Gastrocnemius medialis (tissue), 4 donors: ENCODE measurements at regions of chr6 and their contacts with region 1.

Region 1: GRCh38 chr6:125779924-125780539 is 10.7 kb upstream of the NCOA7 start:
- DNase-seq: peak; percentile 67 to 74
- ATAC-seq: peak; percentile 92 to 94
- H3K4me3 ChIP-seq: peak overlapping the region; percentile 65 to 80 (median 75)
- H3K27ac ChIP-seq: peak overlapping the region; percentile 91 to 97 (median 95)
- H3K4me1 ChIP-seq: peaks cover 0 to 5% of the 10 kb centered on the region in 2 donors
- H3K27me3 ChIP-seq: no peaks in the 10 kb centered on the region
- CTCF ChIP-seq: peak; percentile 17 to 52 (median 44)
- POLR2A ChIP-seq: no peak

Region 2: GRCh38 chr6:124961777-124962611 is 818.0 kb before region 1 on chr6 and contains the start of gene RNF217:
- in situ Hi-C with region 1: no loop called
- intact Hi-C with region 1: loop called (anchors 10 kb)
- DNase-seq: peak; percentile 29 to 59
- ATAC-seq: peak; percentile 34 to 39
- H3K4me3 ChIP-seq: peak within 1 kb of the TSS; percentile 72 to 87 (median 81)
- H3K27ac ChIP-seq: peak within 1 kb of the TSS; percentile 83 to 92 (median 90)
- H3K4me1 ChIP-seq: peaks cover 34 to 43% of the 10 kb centered on the region in 2 donors
- H3K27me3 ChIP-seq: no peaks in the 10 kb centered on the region
- CTCF ChIP-seq: peak in 1 of 5 experiments; percentile 10
- POLR2A ChIP-seq: peak; percentile 50 to 54
- total RNA-seq, gene RNF217: 4.5 to 15.5 (median 12.4) TPM

Region 3: DNA sequence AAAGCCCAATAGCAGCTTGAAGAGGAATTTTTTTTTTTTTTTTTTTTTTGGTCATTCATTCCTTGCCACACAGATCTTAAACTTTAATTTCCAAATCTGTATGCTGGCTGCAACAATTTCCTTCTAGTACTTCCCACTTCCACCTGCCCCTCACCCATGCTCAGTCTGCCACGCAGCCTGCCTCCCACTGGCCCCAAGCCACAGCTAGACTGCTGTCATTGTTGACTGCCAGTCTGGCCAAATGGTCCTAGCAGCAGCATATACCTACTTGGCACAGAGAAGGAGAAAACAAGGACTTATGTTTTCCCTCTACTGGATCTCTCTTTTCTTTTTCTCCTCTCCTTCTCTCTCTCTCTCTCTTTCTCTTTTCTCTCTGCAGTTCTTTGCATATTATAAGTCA is 148.9 kb before region 1 on chr6:
- in situ Hi-C with region 1: no loop called
- intact Hi-C with region 1: no loop called
- DNase-seq: no peak
- ATAC-seq: no peak
- H3K4me3 ChIP-seq: no peak overlapping the region
- H3K27ac ChIP-seq: no peak overlapping the region
- H3K4me1 ChIP-seq: no peaks in the 10 kb centered on the region
- H3K27me3 ChIP-seq: no peaks in the 10 kb centered on the region
- CTCF ChIP-seq: no peak
- POLR2A ChIP-seq: no peak

Region 4: GRCh38 chr6:125790358-125791150 is 10.5 kb after region 1 on chr6 and contains the start of gene NCOA7:
- in situ Hi-C with region 1: no loop called
- intact Hi-C with region 1: loop called (anchors 1 kb)
- DNase-seq: peak; percentile 67 to 71
- ATAC-seq: peak; percentile 83 to 85
- H3K4me3 ChIP-seq: peak within 1 kb of the TSS; percentile 76 to 97 (median 89)
- H3K27ac ChIP-seq: peak within 1 kb of the TSS; percentile 90 to 98 (median 92)
- H3K4me1 ChIP-seq: peaks cover 19% of the 10 kb centered on the region in 2 donors
- H3K27me3 ChIP-seq: no peaks in the 10 kb centered on the region
- CTCF ChIP-seq: peak in 2 of 5 experiments; percentile 17 to 27
- POLR2A ChIP-seq: peak; percentile 81 to 86
- total RNA-seq, gene NCOA7: 7.0 to 9.5 (median 9.2) TPM

Region 5: DNA sequence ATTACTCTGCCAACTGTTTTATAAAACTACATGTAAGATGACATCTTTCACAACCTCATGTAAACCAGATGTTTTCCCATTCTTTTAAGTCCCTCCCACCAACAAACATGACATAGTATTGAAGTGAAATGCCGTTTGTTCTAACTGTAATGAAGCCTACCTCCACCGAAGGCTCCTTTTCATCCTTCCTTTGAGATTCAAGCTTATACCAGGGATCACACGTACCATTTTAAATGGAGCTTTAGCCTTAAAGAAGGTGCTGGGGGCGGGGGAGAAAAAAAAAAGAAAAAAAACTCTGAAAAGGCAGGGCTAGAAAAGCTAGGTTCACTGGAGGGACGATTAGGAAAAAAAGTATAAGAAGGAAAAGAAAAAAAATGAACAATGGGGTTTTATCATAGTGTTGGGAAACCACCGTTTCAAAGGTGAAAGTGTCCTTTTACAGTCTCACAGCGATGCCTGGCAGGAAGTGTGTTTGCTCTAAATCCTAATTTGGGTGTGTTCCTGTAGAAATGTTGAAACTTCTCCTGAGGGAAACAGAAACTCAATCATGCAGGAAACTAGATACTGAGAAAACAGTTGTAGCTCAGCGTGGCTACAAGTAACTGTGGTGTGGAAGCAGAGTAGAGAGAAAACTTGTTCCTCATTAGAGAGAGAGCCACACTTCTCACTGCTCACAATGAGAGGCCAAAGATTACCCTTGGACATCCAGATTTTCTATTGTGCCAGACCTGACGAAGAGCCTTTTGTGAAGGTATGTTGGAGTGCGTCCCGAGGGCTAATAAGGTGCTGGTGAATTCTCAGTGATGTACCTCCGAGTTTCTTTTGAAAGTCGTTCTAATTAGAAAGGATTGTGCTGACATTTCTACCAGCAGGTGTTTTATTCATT is 138.9 kb after region 1 on chr6:
- in situ Hi-C with region 1: no loop called
- intact Hi-C with region 1: loop called (anchors 5 kb)
- DNase-seq: peak in 1 of 2 donors; percentile 43
- ATAC-seq: peak; percentile 96 to 99
- H3K4me3 ChIP-seq: peak overlapping the region; percentile 23 to 56 (median 42)
- H3K27ac ChIP-seq: peak overlapping the region; percentile 70 to 77 (median 74)
- H3K4me1 ChIP-seq: peaks cover 0 to 8% of the 10 kb centered on the region in 2 donors
- H3K27me3 ChIP-seq: no peaks in the 10 kb centered on the region
- CTCF ChIP-seq: no peak
- POLR2A ChIP-seq: peak in 1 of 2 donors; percentile 53

Region 6: DNA sequence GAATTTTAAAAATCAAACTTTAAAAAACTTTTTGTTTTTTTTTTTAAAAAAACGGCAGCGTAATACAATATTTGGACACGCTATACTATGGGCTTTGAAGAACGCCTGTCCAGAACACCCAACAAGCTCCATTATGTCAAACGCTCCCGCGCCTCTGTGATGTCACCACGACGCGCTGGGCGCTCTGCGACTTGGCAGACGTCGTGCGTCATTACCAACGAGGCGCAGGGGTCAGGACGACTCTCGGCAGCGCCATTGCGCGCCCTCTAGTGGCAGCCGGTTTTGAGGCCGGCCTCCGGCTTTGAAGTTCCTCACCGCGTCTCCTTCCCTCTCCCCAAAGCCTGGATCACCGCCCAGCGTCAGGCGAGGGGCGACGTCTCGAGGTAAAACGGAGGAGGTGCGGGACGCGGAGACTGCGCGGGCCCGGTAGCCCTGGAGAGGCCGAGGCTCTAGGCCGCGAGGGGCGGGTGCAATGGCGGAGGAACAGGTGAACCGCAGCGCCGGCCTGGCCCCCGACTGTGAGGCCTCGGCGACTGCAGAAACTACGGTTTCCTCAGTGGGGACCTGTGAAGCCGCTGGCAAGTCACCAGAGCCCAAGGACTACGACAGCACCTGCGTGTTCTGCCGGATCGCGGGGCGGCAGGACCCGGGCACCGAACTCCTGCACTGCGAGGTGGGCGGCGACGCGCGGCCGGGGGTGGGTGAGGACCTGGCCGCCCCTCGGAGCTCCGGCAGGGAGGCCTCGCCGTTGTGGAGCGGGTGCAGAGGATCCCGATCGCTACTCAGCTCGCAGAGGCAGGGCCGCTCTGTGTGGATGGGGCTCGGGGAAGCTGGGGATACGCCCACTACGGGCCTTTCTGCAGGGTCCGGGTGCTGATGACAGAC is 176.7 kb after region 1 on chr6 and contains the start of gene HINT3:
- in situ Hi-C with region 1: loop called in 2 of 4 experiments (anchors 5 to 10 kb)
- intact Hi-C with region 1: loop called (anchors 1 kb)
- DNase-seq: peak; percentile 93 to 94
- ATAC-seq: peak; percentile 93 to 98
- H3K4me3 ChIP-seq: peak within 1 kb of the TSS; percentile 62 to 97 (median 82)
- H3K27ac ChIP-seq: peak within 1 kb of the TSS; percentile 83 to 95 (median 92)
- H3K4me1 ChIP-seq: peaks cover 10 to 20% of the 10 kb centered on the region in 2 donors
- H3K27me3 ChIP-seq: no peaks in the 10 kb centered on the region
- CTCF ChIP-seq: peak; percentile 97 to 99 (median 98)
- POLR2A ChIP-seq: peak; percentile 59 to 62
- total RNA-seq, gene HINT3: 54.3 to 81.5 (median 67.5) TPM

Region 7: DNA sequence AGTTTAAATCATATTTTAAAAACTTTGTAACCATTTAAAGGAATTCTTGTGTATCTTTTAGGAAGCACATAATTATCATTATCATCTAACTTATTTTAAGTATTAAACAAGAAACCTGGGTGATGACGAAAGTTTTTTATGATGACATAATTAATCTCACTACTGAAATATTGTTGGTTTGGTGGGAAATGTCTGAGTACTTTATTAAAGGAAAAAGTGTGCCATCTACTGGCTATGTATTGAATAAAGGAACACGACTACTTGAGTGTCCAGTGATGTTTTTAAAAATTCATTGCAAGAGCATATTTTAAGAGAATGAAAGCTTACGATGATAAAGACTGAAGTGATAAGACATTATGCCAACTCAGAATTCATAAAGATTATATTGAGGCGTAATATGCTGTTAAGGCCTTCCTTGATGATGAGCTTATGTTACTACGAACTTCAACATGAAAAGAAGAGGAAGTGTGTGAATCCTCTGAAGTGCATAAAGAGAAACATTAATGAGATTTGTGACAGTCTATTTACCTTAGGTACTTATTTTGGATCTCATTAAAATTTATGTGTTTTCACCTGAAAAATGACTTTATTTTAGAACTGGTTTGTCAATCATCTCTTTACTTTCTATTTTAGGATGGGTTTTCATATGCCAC is 194.3 kb after region 1 on chr6:
- in situ Hi-C with region 1: loop called in 2 of 4 experiments (anchors 5 to 10 kb)
- intact Hi-C with region 1: no loop called
- DNase-seq: no peak
- ATAC-seq: peak in 1 of 2 donors; percentile 49
- H3K4me3 ChIP-seq: no peak overlapping the region
- H3K27ac ChIP-seq: no peak overlapping the region
- H3K4me1 ChIP-seq: no peaks in the 10 kb centered on the region
- H3K27me3 ChIP-seq: no peaks in the 10 kb centered on the region
- CTCF ChIP-seq: peak in 2 of 5 experiments; percentile 45 to 51
- POLR2A ChIP-seq: no peak